ENCODE measurements at regions of chr4 and their contacts with region 1.

Region 1: DNA sequence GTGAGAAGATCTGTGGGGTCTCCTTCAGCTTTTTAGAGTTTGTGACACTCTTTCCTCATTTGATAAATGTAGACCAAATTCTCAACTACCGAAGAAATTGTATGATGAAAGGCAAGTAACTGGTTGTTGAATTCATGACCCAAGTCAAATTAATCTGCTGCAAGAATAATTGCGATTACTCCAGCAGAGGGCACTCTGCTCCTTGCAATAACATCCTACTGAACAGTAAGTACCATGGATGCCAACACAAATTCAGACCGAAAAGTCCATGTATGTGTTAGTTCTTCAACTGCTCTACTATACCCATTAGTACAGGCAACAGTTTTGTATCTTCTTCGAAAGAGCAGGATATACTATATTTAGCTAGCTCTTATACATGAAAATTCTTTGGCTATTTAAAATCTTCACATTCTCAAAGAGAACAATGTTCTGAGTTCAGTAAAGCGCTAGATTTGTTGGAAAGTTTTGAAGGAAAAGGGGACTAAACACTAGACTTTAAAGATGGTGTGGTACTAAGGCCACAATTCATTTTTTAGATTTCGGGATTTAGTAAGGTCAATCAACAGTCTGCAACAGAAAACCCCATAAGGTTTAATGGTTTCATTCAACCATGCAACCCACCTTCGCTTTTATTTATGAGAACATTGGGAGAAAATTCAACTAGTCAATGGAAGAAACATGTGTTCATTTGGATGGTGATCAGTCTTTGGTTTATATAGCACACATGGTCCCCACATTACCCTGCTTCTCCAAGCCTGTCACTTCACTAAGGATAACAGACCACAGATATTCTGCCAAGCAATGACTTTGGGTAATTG is 105.4 kb upstream of the TBC1D9 start:
- DNase-seq: peak; percentile 86
- H3K4me3 ChIP-seq: no peak overlapping the region
- H3K27ac ChIP-seq: peak overlapping the region in 2 of 4 donors; percentile 51 to 62
- H3K4me1 ChIP-seq: peaks cover 0 to 30% (median 21%) of the 10 kb centered on the region in 4 donors
- H3K27me3 ChIP-seq: no peaks in the 10 kb centered on the region
- CTCF ChIP-seq: peak; percentile 70 to 79 (median 75)
- EP300 ChIP-seq: no peak
- POLR2A ChIP-seq: no peak

Region 2: GRCh38 chr4:140930557-140930956 is 69.0 kb after region 1 on chr4:
- intact Hi-C with region 1: loop called (anchors 5 kb)
- DNase-seq: peak; percentile 71
- H3K4me3 ChIP-seq: no peak overlapping the region
- H3K27ac ChIP-seq: peak overlapping the region in 2 of 4 donors; percentile 5 to 57
- H3K4me1 ChIP-seq: peaks cover 0 to 70% (median 44%) of the 10 kb centered on the region in 4 donors
- H3K27me3 ChIP-seq: no peaks in the 10 kb centered on the region
- CTCF ChIP-seq: no peak
- EP300 ChIP-seq: peak in 1 of 4 donors; percentile 51
- POLR2A ChIP-seq: no peak

Region 3: GRCh38 chr4:141028024-141028529 is 166.5 kb after region 1 on chr4:
- intact Hi-C with region 1: loop called (anchors 10 kb)
- DNase-seq: no peak
- H3K4me3 ChIP-seq: no peak overlapping the region
- H3K27ac ChIP-seq: peak overlapping the region; percentile 43 to 79 (median 76)
- H3K4me1 ChIP-seq: peaks cover 0 to 39% (median 33%) of the 10 kb centered on the region in 4 donors
- H3K27me3 ChIP-seq: no peaks in the 10 kb centered on the region
- CTCF ChIP-seq: no peak
- EP300 ChIP-seq: peak; percentile 7 to 45 (median 32)
- POLR2A ChIP-seq: no peak

Region 4: DNA sequence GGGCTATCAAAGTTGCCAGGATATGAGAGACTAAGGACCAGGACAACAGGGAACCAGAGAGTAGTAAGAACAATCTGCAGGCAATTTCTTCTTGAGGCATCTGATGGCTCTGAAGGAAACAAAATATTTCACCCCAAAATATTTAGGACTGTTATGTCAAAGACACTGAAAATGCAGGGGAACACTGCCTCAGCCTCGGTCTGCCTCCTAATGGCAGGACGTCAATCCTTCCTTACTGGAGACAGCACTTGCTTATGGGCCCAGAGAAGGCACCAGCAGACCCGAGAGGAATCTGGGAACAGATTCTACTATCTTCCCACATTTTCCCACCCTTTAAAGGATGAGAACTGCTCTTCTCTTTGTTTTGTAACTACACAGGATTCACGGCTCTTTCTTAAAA is 248.4 kb after region 1 on chr4:
- intact Hi-C with region 1: no loop called
- DNase-seq: no peak
- H3K4me3 ChIP-seq: no peak overlapping the region
- H3K27ac ChIP-seq: peak overlapping the region in 1 of 4 donors; percentile 21
- H3K4me1 ChIP-seq: peaks cover 0 to 21% (median 4%) of the 10 kb centered on the region in 4 donors
- H3K27me3 ChIP-seq: no peaks in the 10 kb centered on the region
- CTCF ChIP-seq: no peak
- EP300 ChIP-seq: no peak
- POLR2A ChIP-seq: no peak

Region 5: GRCh38 chr4:141220655-141221605 is 359.4 kb after region 1 on chr4 and contains the start of gene ZNF330:
- intact Hi-C with region 1: loop called (anchors 5 kb)
- DNase-seq: peak; percentile 95
- H3K4me3 ChIP-seq: peak within 1 kb of the TSS; percentile 79 to 97 (median 94)
- H3K27ac ChIP-seq: peak within 1 kb of the TSS; percentile 96 to 100 (median 98)
- H3K4me1 ChIP-seq: peaks cover 0 to 40% (median 21%) of the 10 kb centered on the region in 4 donors
- H3K27me3 ChIP-seq: no peaks in the 10 kb centered on the region
- CTCF ChIP-seq: no peak
- EP300 ChIP-seq: peak in 1 of 4 donors; percentile 61
- POLR2A ChIP-seq: peak; percentile 85 to 93
- total RNA-seq, gene ZNF330: 32.6 to 48.2 (median 35.9) TPM

Measured in sigmoid colon (tissue), 7 donors.